ENCODE measurements at regions of chr9 and their contacts with region 1.

Region 1: DNA sequence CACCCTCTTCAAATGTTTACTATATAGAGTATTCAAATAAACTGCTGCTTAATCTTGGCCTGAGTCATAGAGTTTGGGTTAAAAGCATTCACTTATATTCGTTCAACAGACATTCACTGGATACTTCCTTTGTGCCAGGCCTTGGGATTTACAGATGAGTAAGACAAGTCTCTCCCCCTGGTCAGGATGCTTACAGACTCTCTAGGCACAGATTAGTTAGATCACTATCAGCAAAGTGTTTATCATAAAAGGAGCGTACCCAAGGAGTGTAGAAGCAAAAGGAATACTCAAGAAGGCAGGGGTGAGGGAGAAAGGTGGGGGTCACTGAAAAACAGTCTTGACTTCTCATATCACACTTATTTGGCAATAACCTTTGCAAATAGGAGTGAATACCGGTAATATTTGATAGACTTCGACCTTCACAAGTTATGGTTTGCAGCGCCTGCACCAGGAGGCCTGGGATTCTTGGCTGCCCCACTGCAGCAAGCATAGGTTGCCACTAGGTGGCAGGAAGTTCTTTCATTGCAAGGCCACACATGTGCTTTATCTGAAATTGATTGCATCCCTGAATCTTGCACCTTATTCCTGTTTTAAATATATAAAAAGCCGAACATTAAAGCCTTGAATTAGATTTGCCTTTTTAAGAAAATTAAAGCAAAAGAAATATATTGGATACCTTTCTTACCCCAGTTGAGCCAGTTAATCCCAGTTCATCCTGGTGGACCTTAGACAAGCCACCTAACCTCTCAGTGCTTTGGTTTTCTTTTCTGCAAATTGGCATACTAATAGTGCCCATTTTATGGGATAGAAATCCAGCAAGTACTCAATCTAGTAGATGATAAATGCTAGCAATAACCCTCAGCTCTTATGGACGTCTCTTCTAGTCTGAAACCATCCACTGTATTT is 6.5 kb upstream of the TRMT10B start:
- DNase-seq: peak; percentile 78
- ATAC-seq: peak; percentile 98
- H3K4me3 Mint-ChIP-seq: no peak overlapping the region
- H3K27ac Mint-ChIP-seq: no peak overlapping the region
- H3K4me1 Mint-ChIP-seq: no peaks in the 10 kb centered on the region
- H3K27me3 Mint-ChIP-seq: no peaks in the 10 kb centered on the region

Region 2: GRCh38 chr9:37582548-37583157 is 164.4 kb before region 1 on chr9:
- CTCF ChIA-PET with region 1: interaction called, 4 read pairs
- POLR2A ChIA-PET with region 1: no interaction called
- intact Hi-C with region 1: loop called in 1 of 2 experiments (anchors 2 kb)
- DNase-seq: no peak
- ATAC-seq: no peak
- H3K4me3 Mint-ChIP-seq: no peak overlapping the region
- H3K27ac Mint-ChIP-seq: no peak overlapping the region
- H3K4me1 Mint-ChIP-seq: peaks cover 7% of the 10 kb centered on the region
- H3K27me3 Mint-ChIP-seq: no peaks in the 10 kb centered on the region

Region 3: DNA sequence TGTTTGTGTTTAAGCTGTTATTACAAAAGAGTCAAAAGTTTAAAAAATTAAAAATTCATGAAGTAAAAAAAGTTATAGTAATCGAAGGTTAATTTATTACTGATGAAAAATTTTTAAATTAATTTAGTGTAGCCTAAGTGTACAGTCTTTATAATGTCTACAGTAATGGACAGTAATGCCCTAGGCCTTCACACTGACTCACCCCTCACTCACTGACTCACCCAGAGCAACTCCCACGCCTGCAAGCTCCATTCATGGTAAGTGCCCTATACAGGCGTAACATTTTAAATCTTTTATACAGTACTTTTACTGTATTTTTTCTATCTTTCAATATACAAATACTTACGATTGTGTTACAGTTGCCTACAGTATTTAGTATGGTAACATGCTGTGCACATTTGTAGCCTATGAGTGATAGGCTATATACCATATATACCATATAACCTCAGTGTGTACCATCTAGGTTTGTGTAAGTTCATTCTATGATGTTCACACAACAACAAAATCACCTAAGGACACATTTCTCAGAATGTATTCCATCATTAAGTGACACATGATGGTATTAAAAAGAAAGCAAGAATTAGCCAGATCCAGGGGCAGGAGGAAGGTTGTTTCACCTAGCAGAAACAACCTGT is 93.6 kb after region 1 on chr9:
- CTCF ChIA-PET with region 1: no interaction called
- POLR2A ChIA-PET with region 1: no interaction called
- intact Hi-C with region 1: loop called in 1 of 2 experiments (anchors 5 kb)
- DNase-seq: peak; percentile 41
- ATAC-seq: peak; percentile 58
- H3K4me3 Mint-ChIP-seq: no peak overlapping the region
- H3K27ac Mint-ChIP-seq: no peak overlapping the region
- H3K4me1 Mint-ChIP-seq: peaks cover 11% of the 10 kb centered on the region
- H3K27me3 Mint-ChIP-seq: no peaks in the 10 kb centered on the region

Region 4: GRCh38 chr9:37859043-37859442 is 111.9 kb after region 1 on chr9:
- CTCF ChIA-PET with region 1: no interaction called
- POLR2A ChIA-PET with region 1: no interaction called
- intact Hi-C with region 1: loop called in 1 of 2 experiments (anchors 5 kb)
- DNase-seq: no peak
- ATAC-seq: no peak
- H3K4me3 Mint-ChIP-seq: no peak overlapping the region
- H3K27ac Mint-ChIP-seq: no peak overlapping the region
- H3K4me1 Mint-ChIP-seq: no peaks in the 10 kb centered on the region
- H3K27me3 Mint-ChIP-seq: no peaks in the 10 kb centered on the region

Region 5: GRCh38 chr9:38160613-38161215 is 413.6 kb after region 1 on chr9:
- CTCF ChIA-PET with region 1: no interaction called
- POLR2A ChIA-PET with region 1: no interaction called
- intact Hi-C with region 1: loop called in 1 of 2 experiments (anchors 2 kb)
- DNase-seq: peak; percentile 83
- ATAC-seq: peak; percentile 72
- H3K4me3 Mint-ChIP-seq: no peak overlapping the region
- H3K27ac Mint-ChIP-seq: no peak overlapping the region
- H3K4me1 Mint-ChIP-seq: peaks cover 2% of the 10 kb centered on the region
- H3K27me3 Mint-ChIP-seq: no peaks in the 10 kb centered on the region